Natural killer cell (primary cell): ENCODE measurements at regions of chr9 and their contacts with region 1.

Region 1: GRCh38 chr9:70419546-70420266 is 5.2 kb upstream of the KLF9 start:
- DNase-seq: peak; percentile 86 to 91
- ATAC-seq: peak; percentile 60 to 79 (median 72)
- H3K4me3 ChIP-seq: peak overlapping the region; percentile 72
- H3K4me3 Mint-ChIP-seq: peak overlapping the region; percentile 97
- H3K27ac ChIP-seq: peak overlapping the region; percentile 98
- H3K27ac Mint-ChIP-seq: peak overlapping the region; percentile 96 to 97
- H3K4me1 ChIP-seq: peaks cover 36% of the 10 kb centered on the region
- H3K4me1 Mint-ChIP-seq: peaks cover 30 to 45% of the 10 kb centered on the region in 2 donors
- H3K27me3 ChIP-seq: no peaks in the 10 kb centered on the region
- H3K27me3 Mint-ChIP-seq: no peaks in the 10 kb centered on the region
- CTCF ChIP-seq: no peak

Region 2: DNA sequence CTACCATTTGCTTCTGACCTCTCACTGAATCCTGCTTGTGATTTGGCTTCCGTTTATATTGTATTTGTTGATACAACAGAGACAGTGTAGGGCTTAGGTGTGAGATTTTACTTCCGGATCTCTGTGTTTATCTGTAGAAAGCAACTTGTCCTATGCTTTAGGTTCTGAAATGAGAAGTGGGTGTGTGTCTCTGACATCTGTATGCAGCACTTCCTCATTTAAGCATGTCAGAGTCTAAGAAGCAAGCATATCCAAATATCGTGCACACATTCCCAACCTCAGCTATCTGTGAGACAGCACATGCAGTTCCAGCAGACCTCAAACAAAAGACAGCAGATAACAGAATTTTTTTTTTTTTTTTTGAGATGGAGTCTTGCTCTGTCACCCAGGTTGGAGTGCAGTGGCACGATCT is 21.6 kb before region 1 on chr9:
- intact Hi-C with region 1: loop called (anchors 1 kb)
- DNase-seq: peak in 1 of 2 donors; percentile 75
- ATAC-seq: peak; percentile 92 to 98 (median 97)
- H3K4me3 ChIP-seq: no peak overlapping the region
- H3K4me3 Mint-ChIP-seq: peak overlapping the region; percentile 83
- H3K27ac ChIP-seq: peak overlapping the region; percentile 83
- H3K27ac Mint-ChIP-seq: peak overlapping the region; percentile 84 to 93
- H3K4me1 ChIP-seq: peaks cover 39% of the 10 kb centered on the region
- H3K4me1 Mint-ChIP-seq: peaks cover 59 to 67% of the 10 kb centered on the region in 2 donors
- H3K27me3 ChIP-seq: no peaks in the 10 kb centered on the region
- H3K27me3 Mint-ChIP-seq: no peaks in the 10 kb centered on the region
- CTCF ChIP-seq: no peak

Region 3: GRCh38 chr9:70484210-70485130 is 64.8 kb after region 1 on chr9:
- intact Hi-C with region 1: loop called (anchors 1 kb)
- DNase-seq: peak in 1 of 2 donors; percentile 73
- ATAC-seq: peak; percentile 56 to 86 (median 73)
- H3K4me3 ChIP-seq: no peak overlapping the region
- H3K4me3 Mint-ChIP-seq: no peak overlapping the region
- H3K27ac ChIP-seq: no peak overlapping the region
- H3K27ac Mint-ChIP-seq: no peak overlapping the region
- H3K4me1 ChIP-seq: no peaks in the 10 kb centered on the region
- H3K4me1 Mint-ChIP-seq: peaks cover 4 to 5% of the 10 kb centered on the region in 2 donors
- H3K27me3 ChIP-seq: no peaks in the 10 kb centered on the region
- H3K27me3 Mint-ChIP-seq: peaks cover 0 to 4% of the 10 kb centered on the region in 2 donors
- CTCF ChIP-seq: peak; percentile 37

Region 4: DNA sequence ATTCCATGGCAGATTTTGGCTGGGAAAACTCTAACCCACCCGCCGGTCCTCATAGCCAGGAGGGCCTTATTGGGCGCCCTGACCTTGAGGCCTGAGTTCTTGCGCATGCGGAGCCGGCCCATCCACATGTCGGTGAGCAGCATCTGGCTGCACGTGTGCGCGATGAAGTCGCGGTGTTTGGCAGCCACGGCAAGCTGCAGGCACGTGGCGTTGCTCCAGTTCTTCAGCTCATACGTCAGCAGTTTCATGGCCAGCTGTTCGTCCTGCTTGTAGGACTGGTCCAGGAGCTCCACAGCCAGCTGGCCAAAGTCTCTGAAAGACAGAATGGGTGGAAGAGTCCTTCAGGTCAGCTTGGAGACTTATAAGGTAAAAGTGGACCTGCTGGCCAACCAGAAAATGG is 199.1 kb after region 1 on chr9:
- intact Hi-C with region 1: no loop called
- DNase-seq: no peak
- ATAC-seq: no peak
- H3K4me3 ChIP-seq: no peak overlapping the region
- H3K4me3 Mint-ChIP-seq: no peak overlapping the region
- H3K27ac ChIP-seq: no peak overlapping the region
- H3K27ac Mint-ChIP-seq: no peak overlapping the region
- H3K4me1 ChIP-seq: no peaks in the 10 kb centered on the region
- H3K4me1 Mint-ChIP-seq: no peaks in the 10 kb centered on the region
- H3K27me3 ChIP-seq: no peaks in the 10 kb centered on the region
- H3K27me3 Mint-ChIP-seq: no peaks in the 10 kb centered on the region
- CTCF ChIP-seq: no peak